Keratinocyte (primary cell): ENCODE measurements at regions of chr11 and their contacts with region 1.

Region 1: GRCh38 chr11:82216927-82217570 is 516.6 kb downstream of the FAM181B start:
- DNase-seq: no peak
- H3K4me3 ChIP-seq: no peak overlapping the region
- H3K27ac ChIP-seq: no peak overlapping the region
- H3K4me1 ChIP-seq: no peaks in the 10 kb centered on the region
- H3K27me3 ChIP-seq: no peaks in the 10 kb centered on the region
- CTCF ChIP-seq: no peak

Region 2: DNA sequence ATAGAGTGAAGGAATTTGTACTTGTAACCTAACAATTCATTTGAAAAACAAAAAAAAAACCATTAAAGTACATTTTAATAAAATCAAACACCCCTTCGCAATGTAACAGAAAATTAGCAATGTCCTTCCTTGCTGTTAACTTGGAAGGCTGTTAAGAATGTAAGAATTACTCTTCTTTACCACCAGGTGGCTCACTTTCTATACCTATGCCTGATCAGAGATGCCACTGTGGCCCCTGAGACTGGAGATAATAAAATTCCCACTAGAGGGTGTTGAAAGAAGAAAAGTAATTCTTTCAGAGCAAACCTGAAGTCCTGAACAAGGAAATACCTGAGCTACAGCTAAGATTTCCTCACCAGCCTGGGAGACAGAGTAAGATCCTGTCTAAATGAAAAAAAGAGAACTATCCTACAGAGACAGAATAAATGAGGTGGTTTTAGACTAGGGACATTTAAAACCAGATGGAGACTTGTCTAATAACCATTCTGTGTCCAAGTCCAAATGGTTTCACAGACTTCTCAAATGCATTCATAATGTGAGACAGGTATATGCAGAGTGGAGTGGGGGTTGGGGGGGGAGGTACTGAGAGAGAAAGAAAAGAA is 572.7 kb before region 1 on chr11:
- dilution Hi-C with region 1: loop called (anchors 25 kb)
- DNase-seq: peak; percentile 21
- H3K4me3 ChIP-seq: no peak overlapping the region
- H3K27ac ChIP-seq: no peak overlapping the region
- H3K4me1 ChIP-seq: no peaks in the 10 kb centered on the region
- H3K27me3 ChIP-seq: peaks cover 6% of the 10 kb centered on the region
- CTCF ChIP-seq: peak; percentile 42 to 56 (median 49)

Region 3: DNA sequence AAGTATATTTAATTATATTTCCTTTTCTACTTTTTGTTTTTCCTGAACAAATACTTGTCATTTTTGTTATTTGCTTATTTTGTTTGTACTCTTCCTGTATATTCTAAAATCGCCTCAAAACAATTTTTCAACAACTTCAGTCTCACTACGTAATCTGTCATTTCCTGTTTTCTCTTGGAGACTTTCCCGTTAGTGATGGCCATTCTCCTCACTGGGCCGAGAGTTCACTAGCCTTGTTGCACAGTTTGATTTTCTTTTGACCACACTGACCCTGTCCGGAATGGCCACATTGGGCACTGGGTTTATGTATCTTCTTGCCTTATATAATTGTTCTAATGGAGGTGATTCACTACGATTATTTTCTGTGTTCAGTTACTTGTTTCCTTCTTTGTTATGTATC is 209.5 kb before region 1 on chr11:
- dilution Hi-C with region 1: no loop called
- DNase-seq: no peak
- H3K4me3 ChIP-seq: no peak overlapping the region
- H3K27ac ChIP-seq: no peak overlapping the region
- H3K4me1 ChIP-seq: peaks cover 2% of the 10 kb centered on the region
- H3K27me3 ChIP-seq: no peaks in the 10 kb centered on the region
- CTCF ChIP-seq: no peak

Region 4: GRCh38 chr11:82105331-82105998 is 111.6 kb before region 1 on chr11:
- dilution Hi-C with region 1: no loop called
- DNase-seq: no peak
- H3K4me3 ChIP-seq: no peak overlapping the region
- H3K27ac ChIP-seq: no peak overlapping the region
- H3K4me1 ChIP-seq: no peaks in the 10 kb centered on the region
- H3K27me3 ChIP-seq: no peaks in the 10 kb centered on the region
- CTCF ChIP-seq: no peak

Region 5: DNA sequence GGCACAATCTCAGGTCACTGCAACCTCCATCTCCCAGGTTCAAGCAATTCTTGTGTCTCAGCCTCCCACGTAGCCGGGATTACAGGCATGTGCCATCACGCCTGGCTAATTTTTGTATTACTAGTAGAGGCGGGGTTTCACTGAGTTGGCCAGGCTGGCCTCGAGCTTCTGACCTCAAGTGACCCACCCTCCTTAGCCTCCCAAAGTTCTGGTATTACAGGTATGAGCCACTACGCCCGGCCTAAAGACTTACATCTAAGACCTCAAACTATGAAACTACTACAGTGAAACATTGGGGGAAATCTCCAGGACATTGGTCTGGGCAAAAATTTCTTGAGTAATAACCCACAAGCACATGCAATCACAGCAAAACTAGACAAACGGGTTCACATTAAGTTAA is 530.4 kb after region 1 on chr11:
- dilution Hi-C with region 1: no loop called
- DNase-seq: peak; percentile 19
- H3K4me3 ChIP-seq: no peak overlapping the region
- H3K27ac ChIP-seq: peak overlapping the region; percentile 43
- H3K4me1 ChIP-seq: peaks cover 15% of the 10 kb centered on the region
- H3K27me3 ChIP-seq: no peaks in the 10 kb centered on the region
- CTCF ChIP-seq: no peak